GM12878 (cell line): ENCODE measurements at regions of chr2 and their contacts with region 1.

Region 1: GRCh38 chr2:76197842-76198448 is 487.2 kb upstream of the GCFC2 start:
- DNase-seq: peak; percentile 20
- ATAC-seq: peak; percentile 82
- H3K4me3 ChIP-seq: no peak overlapping the region
- H3K27ac ChIP-seq: no peak overlapping the region
- H3K4me1 ChIP-seq: no peaks in the 10 kb centered on the region
- H3K27me3 ChIP-seq: no peaks in the 10 kb centered on the region
- CTCF ChIP-seq: peak; percentile 63 to 72 (median 64)
- EP300 ChIP-seq: no peak
- POLR2A ChIP-seq: no peak
- RAD21 ChIP-seq: peak; percentile 64

Region 2: DNA sequence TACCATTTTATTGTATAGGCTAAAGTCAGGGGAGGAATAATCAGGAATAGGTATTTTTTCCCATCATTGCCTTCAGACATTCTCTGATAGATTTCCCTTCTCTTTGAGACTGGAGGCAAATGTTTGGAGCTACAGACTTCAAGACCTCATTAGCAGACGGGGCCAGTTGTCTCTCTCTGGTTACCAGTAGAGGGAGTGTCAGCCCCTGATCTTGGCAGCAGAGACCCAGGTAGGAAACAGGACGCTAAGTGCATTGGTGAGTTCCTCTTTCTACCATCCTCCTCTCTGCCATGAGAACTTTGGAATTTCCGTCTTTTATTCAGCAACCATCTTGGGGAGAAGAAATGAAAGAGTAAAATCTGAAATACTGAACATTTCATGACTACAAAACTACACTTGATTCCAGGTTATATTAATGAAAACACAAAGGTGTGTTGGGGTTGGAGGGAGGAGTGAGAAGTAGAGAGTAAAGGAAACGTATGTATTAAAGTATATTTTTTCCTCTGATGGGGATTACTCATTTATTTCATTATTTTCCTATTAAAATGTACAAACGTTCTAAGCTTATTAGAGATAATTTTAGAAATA is 301.1 kb before region 1 on chr2:
- CTCF ChIA-PET with region 1: interaction called, 3 read pairs
- POLR2A ChIA-PET with region 1: no interaction called
- RAD21 ChIA-PET with region 1: no interaction called
- SMC1A ChIA-PET with region 1: interaction called, 4 read pairs
- in situ Hi-C with region 1: no loop called
- intact Hi-C with region 1: loop called (anchors 5 kb)
- DNase-seq: no peak
- ATAC-seq: peak; percentile 92
- H3K4me3 ChIP-seq: no peak overlapping the region
- H3K27ac ChIP-seq: no peak overlapping the region
- H3K4me1 ChIP-seq: no peaks in the 10 kb centered on the region
- H3K27me3 ChIP-seq: no peaks in the 10 kb centered on the region
- CTCF ChIP-seq: peak; percentile 74 to 88 (median 79)
- EP300 ChIP-seq: no peak
- POLR2A ChIP-seq: no peak
- RAD21 ChIP-seq: peak; percentile 59

Region 3: DNA sequence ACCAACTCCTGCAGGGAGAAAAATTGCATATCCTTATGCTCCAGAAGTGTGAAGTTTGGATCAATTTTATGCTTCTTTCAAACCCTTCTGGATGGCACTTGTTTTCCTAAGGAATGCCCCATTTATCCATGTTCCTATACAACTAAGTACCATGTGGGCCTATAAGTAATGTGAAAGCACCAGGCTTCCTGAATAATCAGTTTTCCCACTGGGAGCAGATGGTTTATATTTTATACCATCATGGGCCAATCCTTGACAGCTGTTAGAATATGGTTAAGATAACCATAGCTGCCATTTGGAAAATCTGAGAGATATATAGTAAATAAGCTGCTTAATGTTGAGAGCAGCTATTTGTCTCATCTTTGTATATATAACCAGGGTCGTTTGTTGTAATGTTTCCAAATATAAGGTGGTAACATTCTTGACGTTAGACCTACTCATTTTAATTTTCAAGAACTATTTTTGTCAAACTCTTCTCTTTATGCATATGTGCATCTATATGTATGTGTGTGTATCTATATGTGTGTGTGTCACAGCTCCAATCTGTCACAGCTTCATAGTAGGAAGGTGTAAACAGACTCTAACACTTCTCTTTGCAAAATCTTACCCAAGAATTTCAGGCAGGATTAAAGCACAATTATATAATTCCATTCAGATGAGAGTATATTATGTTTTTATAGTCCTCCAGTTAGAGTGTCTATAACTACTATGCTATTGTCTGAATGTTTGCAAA is 28.5 kb before region 1 on chr2:
- CTCF ChIA-PET with region 1: no interaction called
- POLR2A ChIA-PET with region 1: no interaction called
- RAD21 ChIA-PET with region 1: no interaction called
- SMC1A ChIA-PET with region 1: no interaction called
- in situ Hi-C with region 1: no loop called
- intact Hi-C with region 1: no loop called
- DNase-seq: no peak
- ATAC-seq: no peak
- H3K4me3 ChIP-seq: no peak overlapping the region
- H3K27ac ChIP-seq: no peak overlapping the region
- H3K4me1 ChIP-seq: no peaks in the 10 kb centered on the region
- H3K27me3 ChIP-seq: no peaks in the 10 kb centered on the region
- CTCF ChIP-seq: no peak
- EP300 ChIP-seq: no peak
- POLR2A ChIP-seq: no peak
- RAD21 ChIP-seq: no peak

Region 4: GRCh38 chr2:76307470-76307869 is 109.5 kb after region 1 on chr2:
- CTCF ChIA-PET with region 1: no interaction called
- POLR2A ChIA-PET with region 1: no interaction called
- RAD21 ChIA-PET with region 1: no interaction called
- SMC1A ChIA-PET with region 1: no interaction called
- in situ Hi-C with region 1: no loop called
- intact Hi-C with region 1: loop called (anchors 5 kb)
- DNase-seq: no peak
- ATAC-seq: peak; percentile 65
- H3K4me3 ChIP-seq: no peak overlapping the region
- H3K27ac ChIP-seq: no peak overlapping the region
- H3K4me1 ChIP-seq: no peaks in the 10 kb centered on the region
- H3K27me3 ChIP-seq: no peaks in the 10 kb centered on the region
- CTCF ChIP-seq: no peak
- EP300 ChIP-seq: peak in 1 of 2 experiments; percentile 36; a peak in 1 of 4 replicates
- POLR2A ChIP-seq: no peak
- RAD21 ChIP-seq: no peak

Region 5: DNA sequence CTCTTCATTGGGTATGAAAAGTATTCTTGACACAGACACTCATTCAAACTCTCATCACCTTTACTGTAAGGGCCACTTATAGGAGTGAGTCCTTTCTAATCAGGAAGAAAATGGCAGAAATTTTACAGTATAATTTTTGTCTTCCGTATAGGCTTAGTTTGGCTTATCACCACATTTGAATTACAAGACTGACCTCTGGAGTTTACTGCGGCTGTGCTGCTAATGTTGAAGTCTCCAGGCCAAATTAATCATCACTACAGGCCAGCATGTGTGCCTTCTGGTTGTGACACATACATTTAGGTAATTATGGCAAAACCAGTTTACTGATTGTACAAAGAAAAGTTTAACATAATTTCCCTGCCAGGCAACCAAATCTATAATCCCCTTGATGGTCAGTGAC is 266.4 kb after region 1 on chr2:
- CTCF ChIA-PET with region 1: interaction called, 11 read pairs
- POLR2A ChIA-PET with region 1: no interaction called
- RAD21 ChIA-PET with region 1: interaction called, 3 read pairs
- SMC1A ChIA-PET with region 1: interaction called, 7 read pairs
- in situ Hi-C with region 1: no loop called
- intact Hi-C with region 1: loop called (anchors 2 kb)
- DNase-seq: no peak
- ATAC-seq: peak; percentile 61
- H3K4me3 ChIP-seq: no peak overlapping the region
- H3K27ac ChIP-seq: no peak overlapping the region
- H3K4me1 ChIP-seq: no peaks in the 10 kb centered on the region
- H3K27me3 ChIP-seq: no peaks in the 10 kb centered on the region
- CTCF ChIP-seq: no peak; a peak in 1 of 6 replicates
- EP300 ChIP-seq: no peak
- POLR2A ChIP-seq: no peak
- RAD21 ChIP-seq: no peak